Ascending aorta (tissue), 2 donors: ENCODE measurements at regions of chr20 and their contacts with region 1.

Region 1: DNA sequence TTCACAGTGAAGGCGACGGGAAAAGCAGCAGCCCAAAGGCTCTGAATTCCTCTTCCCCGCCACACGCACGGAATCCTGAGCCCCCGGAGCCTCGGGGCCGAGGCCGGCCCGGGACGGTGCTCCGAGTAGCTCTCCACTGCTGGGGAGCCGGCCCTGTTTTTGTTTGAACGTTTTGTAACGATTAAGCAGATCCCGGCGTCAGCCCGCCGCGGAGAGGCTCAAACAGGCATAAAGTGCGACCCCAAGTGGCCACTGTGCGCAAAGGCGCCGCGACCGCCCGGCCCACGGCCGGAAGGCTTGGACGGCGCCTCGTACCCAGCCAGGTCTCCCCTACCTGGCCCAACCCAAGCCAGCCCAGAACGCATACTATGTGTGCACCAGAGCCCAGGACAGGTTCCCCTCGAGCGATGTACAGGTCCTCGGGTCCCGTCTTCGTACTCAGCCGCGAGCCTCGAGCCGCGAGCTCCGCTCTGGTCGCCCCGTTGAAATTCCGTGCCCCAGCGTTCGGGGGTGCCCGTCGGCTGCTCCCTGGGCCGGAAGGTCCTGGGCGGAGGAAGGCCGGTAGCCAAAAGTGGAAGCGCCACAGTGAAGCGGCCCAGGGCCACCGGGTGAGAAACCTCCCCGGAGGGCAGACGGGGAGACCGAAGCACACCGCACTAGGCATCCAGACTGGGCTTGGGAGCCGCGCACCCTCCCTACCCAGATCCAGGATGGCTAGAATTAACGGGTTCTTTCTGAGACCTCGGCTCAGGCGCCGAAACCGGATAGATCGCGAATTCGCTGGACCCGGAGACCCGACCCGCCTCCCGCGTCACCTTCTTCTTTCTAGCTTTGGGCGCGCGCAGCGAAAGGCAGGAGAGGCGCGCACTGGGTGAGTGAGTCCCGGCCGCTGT is 1.2 kb upstream of the MAFB start:
- DNase-seq: peak in 1 of 2 donors; percentile 95
- H3K4me3 ChIP-seq: peak overlapping the region; percentile 60 to 79
- H3K27ac ChIP-seq: peak overlapping the region; percentile 95 to 96
- H3K4me1 ChIP-seq: peaks cover 0 to 8% of the 10 kb centered on the region in 2 donors
- H3K27me3 ChIP-seq: no peaks in the 10 kb centered on the region
- CTCF ChIP-seq: peak; percentile 83 to 95 (median 94)

Region 2: GRCh38 chr20:40197691-40198090 is 492.5 kb before region 1 on chr20:
- intact Hi-C with region 1: loop called (anchors 10 kb)
- DNase-seq: no peak
- H3K4me3 ChIP-seq: peak overlapping the region in 1 of 2 donors; percentile 17
- H3K27ac ChIP-seq: peak overlapping the region; percentile 65 to 80
- H3K4me1 ChIP-seq: peaks cover 3 to 20% of the 10 kb centered on the region in 2 donors
- H3K27me3 ChIP-seq: no peaks in the 10 kb centered on the region
- CTCF ChIP-seq: no peak

Region 3: GRCh38 chr20:40293740-40294139 is 396.4 kb before region 1 on chr20:
- intact Hi-C with region 1: loop called (anchors 5 kb)
- DNase-seq: peak in 1 of 2 donors; percentile 84
- H3K4me3 ChIP-seq: no peak overlapping the region
- H3K27ac ChIP-seq: peak overlapping the region; percentile 70 to 77
- H3K4me1 ChIP-seq: peaks cover 0 to 18% of the 10 kb centered on the region in 2 donors
- H3K27me3 ChIP-seq: no peaks in the 10 kb centered on the region
- CTCF ChIP-seq: no peak

Region 4: DNA sequence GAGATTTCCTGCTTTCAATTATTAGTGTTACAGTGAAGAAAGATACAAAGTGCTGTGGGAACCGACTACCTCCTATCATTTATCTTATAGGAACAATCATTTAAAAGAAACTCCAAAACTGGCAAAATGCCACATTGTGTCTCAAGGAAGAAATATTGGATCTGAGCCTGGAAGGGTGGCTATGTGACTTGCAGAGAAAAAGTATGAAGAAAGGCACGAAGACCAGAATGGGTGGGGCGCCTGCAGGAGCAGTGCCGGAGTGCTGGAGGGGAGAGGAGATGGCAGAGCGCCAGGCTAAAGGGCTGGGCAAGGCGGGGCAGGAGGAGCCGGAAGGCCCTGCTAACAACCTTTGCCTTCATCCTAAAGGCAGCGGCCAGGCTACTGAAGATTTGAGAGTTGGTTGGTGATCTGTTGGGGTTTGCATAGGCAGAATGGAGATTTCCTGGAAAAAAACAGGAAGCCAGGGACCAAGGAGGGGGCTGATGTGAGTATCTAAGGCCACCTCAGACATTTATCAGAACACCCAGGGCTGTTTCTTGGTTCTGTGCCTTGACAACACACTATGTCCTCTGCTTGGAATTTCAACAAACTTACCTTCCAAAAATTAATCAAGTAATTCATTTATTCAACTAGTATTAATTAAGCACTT is 126.8 kb before region 1 on chr20:
- intact Hi-C with region 1: loop called (anchors 2 kb)
- DNase-seq: no peak
- H3K4me3 ChIP-seq: no peak overlapping the region
- H3K27ac ChIP-seq: no peak overlapping the region
- H3K4me1 ChIP-seq: peaks cover 0 to 13% of the 10 kb centered on the region in 2 donors
- H3K27me3 ChIP-seq: no peaks in the 10 kb centered on the region
- CTCF ChIP-seq: no peak

Region 5: GRCh38 chr20:40962730-40963504 is 272.7 kb after region 1 on chr20:
- intact Hi-C with region 1: loop called (anchors 2 kb)
- DNase-seq: peak in 1 of 2 donors; percentile 75
- H3K4me3 ChIP-seq: no peak overlapping the region
- H3K27ac ChIP-seq: no peak overlapping the region
- H3K4me1 ChIP-seq: no peaks in the 10 kb centered on the region
- H3K27me3 ChIP-seq: no peaks in the 10 kb centered on the region
- CTCF ChIP-seq: peak; percentile 70 to 96 (median 83)